CD4-positive, alpha-beta memory T cell (primary cell): ENCODE measurements at regions of chr14 and their contacts with region 1.

Region 1: DNA sequence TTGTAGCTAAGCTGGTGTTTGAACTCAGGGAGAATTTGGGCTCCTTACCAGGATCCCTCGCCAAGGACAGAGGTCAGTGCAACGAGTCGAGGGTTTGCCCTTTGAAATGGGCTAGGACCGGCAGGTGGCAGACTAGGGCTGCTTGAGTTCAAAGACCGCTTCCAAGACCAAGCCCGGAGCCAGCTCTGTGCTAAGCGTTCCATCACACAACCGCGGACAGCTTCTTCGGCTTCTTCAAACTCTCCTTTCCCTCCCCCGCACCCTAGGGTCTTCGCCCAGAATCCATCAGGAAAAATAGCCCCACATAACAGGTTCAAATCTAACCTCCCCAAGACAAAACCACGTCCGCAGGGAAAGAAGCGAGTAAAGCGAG is 705 bp upstream of the FLVCR2 start:
- DNase-seq: peak; percentile 54 to 72 (median 62)
- H3K4me3 ChIP-seq: peak overlapping the region; percentile 60 to 94
- H3K4me3 Mint-ChIP-seq: peak overlapping the region; percentile 90 to 99 (median 95)
- H3K27ac ChIP-seq: peak overlapping the region; percentile 46
- H3K27ac Mint-ChIP-seq: peak overlapping the region; percentile 87 to 96 (median 90)
- H3K4me1 ChIP-seq: peaks cover 22% of the 10 kb centered on the region
- H3K4me1 Mint-ChIP-seq: peaks cover 9 to 15% (median 13%) of the 10 kb centered on the region in 4 donors
- H3K27me3 ChIP-seq: no peaks in the 10 kb centered on the region
- H3K27me3 Mint-ChIP-seq: no peaks in the 10 kb centered on the region

Region 2: GRCh38 chr14:75514673-75515628 is 62.8 kb before region 1 on chr14:
- CTCF ChIA-PET with region 1: interaction called, 36 read pairs
- POLR2A ChIA-PET with region 1: interaction called, 4 read pairs
- intact Hi-C with region 1: no loop called
- DNase-seq: peak; percentile 59 to 70 (median 63)
- H3K4me3 ChIP-seq: peak overlapping the region; percentile 45 to 49
- H3K4me3 Mint-ChIP-seq: peak overlapping the region; percentile 88 to 97 (median 94)
- H3K27ac ChIP-seq: peak overlapping the region; percentile 73
- H3K27ac Mint-ChIP-seq: peak overlapping the region; percentile 87 to 99 (median 97)
- H3K4me1 ChIP-seq: peaks cover 33% of the 10 kb centered on the region
- H3K4me1 Mint-ChIP-seq: peaks cover 22 to 51% (median 33%) of the 10 kb centered on the region in 4 donors
- H3K27me3 ChIP-seq: no peaks in the 10 kb centered on the region
- H3K27me3 Mint-ChIP-seq: no peaks in the 10 kb centered on the region

Region 3: GRCh38 chr14:75542588-75543091 is 35.1 kb before region 1 on chr14:
- CTCF ChIA-PET with region 1: interaction called, 12 read pairs
- POLR2A ChIA-PET with region 1: no interaction called
- intact Hi-C with region 1: no loop called
- DNase-seq: peak; percentile 67 to 93 (median 71)
- H3K4me3 ChIP-seq: peak overlapping the region; percentile 34 to 42
- H3K4me3 Mint-ChIP-seq: peak overlapping the region; percentile 66 to 89 (median 82)
- H3K27ac ChIP-seq: peak overlapping the region; percentile 94
- H3K27ac Mint-ChIP-seq: peak overlapping the region; percentile 96 to 99 (median 97)
- H3K4me1 ChIP-seq: peaks cover 71% of the 10 kb centered on the region
- H3K4me1 Mint-ChIP-seq: peaks cover 48 to 79% (median 67%) of the 10 kb centered on the region in 4 donors
- H3K27me3 ChIP-seq: no peaks in the 10 kb centered on the region
- H3K27me3 Mint-ChIP-seq: no peaks in the 10 kb centered on the region

Region 4: DNA sequence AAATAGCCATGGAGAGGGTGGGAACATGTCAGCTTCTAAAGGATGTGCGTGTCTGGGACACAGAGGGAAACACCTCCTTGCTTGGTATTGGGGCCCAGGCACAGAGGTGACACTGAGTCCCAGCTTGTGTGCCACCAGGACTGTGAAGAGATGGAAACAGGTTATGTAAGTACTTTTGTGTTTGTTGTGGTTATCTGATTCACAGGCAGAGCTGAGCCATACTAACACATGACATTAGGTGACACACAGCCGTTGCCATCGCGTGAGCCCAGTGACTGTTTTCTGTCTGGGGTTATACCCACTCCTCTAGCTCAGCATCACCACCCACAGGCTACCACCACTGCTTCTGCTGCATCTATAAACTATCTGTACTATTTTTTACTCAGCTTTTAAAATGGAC is 11.4 kb before region 1 on chr14:
- CTCF ChIA-PET with region 1: interaction called, 42 read pairs
- POLR2A ChIA-PET with region 1: interaction called, 12 read pairs
- intact Hi-C with region 1: no loop called
- DNase-seq: peak; percentile 49 to 86 (median 69)
- H3K4me3 ChIP-seq: no peak overlapping the region
- H3K4me3 Mint-ChIP-seq: peak overlapping the region in 4 of 8 donors; percentile 6 to 63 (median 22)
- H3K27ac ChIP-seq: peak overlapping the region; percentile 13
- H3K27ac Mint-ChIP-seq: peak overlapping the region; percentile 92 to 98 (median 94)
- H3K4me1 ChIP-seq: peaks cover 36% of the 10 kb centered on the region
- H3K4me1 Mint-ChIP-seq: peaks cover 27 to 56% (median 34%) of the 10 kb centered on the region in 4 donors
- H3K27me3 ChIP-seq: no peaks in the 10 kb centered on the region
- H3K27me3 Mint-ChIP-seq: peaks cover 0 to 6% of the 10 kb centered on the region in 2 donors

Region 5: GRCh38 chr14:75654127-75654732 is 76.5 kb after region 1 on chr14:
- CTCF ChIA-PET with region 1: interaction called, 388 read pairs
- POLR2A ChIA-PET with region 1: interaction called, 30 read pairs
- intact Hi-C with region 1: loop called (anchors 1 kb)
- DNase-seq: peak; percentile 71 to 79 (median 74)
- H3K4me3 ChIP-seq: no peak overlapping the region
- H3K4me3 Mint-ChIP-seq: no peak overlapping the region
- H3K27ac ChIP-seq: no peak overlapping the region
- H3K27ac Mint-ChIP-seq: peak overlapping the region in 4 of 7 donors; percentile 5 to 53 (median 36)
- H3K4me1 ChIP-seq: peaks cover 7% of the 10 kb centered on the region
- H3K4me1 Mint-ChIP-seq: peaks cover 4 to 16% (median 9%) of the 10 kb centered on the region in 4 donors
- H3K27me3 ChIP-seq: no peaks in the 10 kb centered on the region
- H3K27me3 Mint-ChIP-seq: no peaks in the 10 kb centered on the region

Region 6: DNA sequence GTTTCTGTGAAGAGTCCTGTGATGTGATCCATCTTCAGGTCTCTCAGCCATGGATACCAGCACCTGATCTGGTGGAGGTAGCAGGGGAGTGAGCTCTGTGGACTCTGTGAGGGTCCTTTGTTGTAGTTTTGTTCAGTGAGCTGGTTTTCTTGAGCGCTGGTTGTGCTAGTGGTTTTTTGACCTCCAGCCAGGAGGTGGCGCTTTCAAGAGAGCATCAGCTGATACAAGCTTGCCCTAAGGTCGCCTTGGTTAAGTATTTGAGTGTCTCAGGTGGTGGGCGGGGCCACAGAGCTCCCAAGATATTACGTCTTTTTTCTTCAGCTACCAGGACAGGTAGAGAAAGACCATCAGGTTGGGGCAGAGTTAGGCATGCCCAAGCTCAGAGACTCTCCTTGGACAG is 223.1 kb after region 1 on chr14:
- CTCF ChIA-PET with region 1: no interaction called
- POLR2A ChIA-PET with region 1: no interaction called
- intact Hi-C with region 1: no loop called
- DNase-seq: no peak
- H3K4me3 ChIP-seq: no peak overlapping the region
- H3K4me3 Mint-ChIP-seq: no peak overlapping the region
- H3K27ac ChIP-seq: no peak overlapping the region
- H3K27ac Mint-ChIP-seq: no peak overlapping the region
- H3K4me1 ChIP-seq: no peaks in the 10 kb centered on the region
- H3K4me1 Mint-ChIP-seq: peaks cover 0 to 1% (median 0%) of the 10 kb centered on the region in 4 donors
- H3K27me3 ChIP-seq: no peaks in the 10 kb centered on the region
- H3K27me3 Mint-ChIP-seq: no peaks in the 10 kb centered on the region

Region 7: GRCh38 chr14:75896341-75896740 is 318.6 kb after region 1 on chr14:
- CTCF ChIA-PET with region 1: no interaction called
- POLR2A ChIA-PET with region 1: no interaction called
- intact Hi-C with region 1: no loop called
- DNase-seq: no peak
- H3K4me3 ChIP-seq: no peak overlapping the region
- H3K4me3 Mint-ChIP-seq: no peak overlapping the region
- H3K27ac ChIP-seq: no peak overlapping the region
- H3K27ac Mint-ChIP-seq: peak overlapping the region in 2 of 7 donors; percentile 19 to 25
- H3K4me1 ChIP-seq: no peaks in the 10 kb centered on the region
- H3K4me1 Mint-ChIP-seq: peaks cover 0 to 4% (median 0%) of the 10 kb centered on the region in 4 donors
- H3K27me3 ChIP-seq: no peaks in the 10 kb centered on the region
- H3K27me3 Mint-ChIP-seq: no peaks in the 10 kb centered on the region

Region 8: GRCh38 chr14:75906676-75907280 is 329.1 kb after region 1 on chr14:
- CTCF ChIA-PET with region 1: interaction called, 5 read pairs
- POLR2A ChIA-PET with region 1: no interaction called
- intact Hi-C with region 1: loop called (anchors 5 kb)
- DNase-seq: peak; percentile 48 to 64 (median 54)
- H3K4me3 ChIP-seq: no peak overlapping the region
- H3K4me3 Mint-ChIP-seq: no peak overlapping the region
- H3K27ac ChIP-seq: no peak overlapping the region
- H3K27ac Mint-ChIP-seq: peak overlapping the region in 2 of 7 donors; percentile 3 to 15
- H3K4me1 ChIP-seq: no peaks in the 10 kb centered on the region
- H3K4me1 Mint-ChIP-seq: no peaks in the 10 kb centered on the region
- H3K27me3 ChIP-seq: no peaks in the 10 kb centered on the region
- H3K27me3 Mint-ChIP-seq: no peaks in the 10 kb centered on the region